Right cardiac atrium (tissue), 5 donors: ENCODE measurements at regions of chr5 and their contacts with region 1.

Region 1: GRCh38 chr5:95730730-95731570 is at the start of gene RHOBTB3:
- DNase-seq: peak; percentile 93 to 97 (median 97)
- ATAC-seq: peak; percentile 83
- H3K4me3 ChIP-seq: peak within 1 kb of the TSS; percentile 67
- H3K27ac ChIP-seq: peak within 1 kb of the TSS; percentile 72
- H3K4me1 ChIP-seq: peaks cover 2% of the 10 kb centered on the region
- H3K27me3 ChIP-seq: no peaks in the 10 kb centered on the region
- total RNA-seq, gene RHOBTB3: 84.7 to 115 (median 104) TPM

Region 2: GRCh38 chr5:95621838-95622629 is 108.9 kb before region 1 on chr5:
- intact Hi-C with region 1: no loop called
- DNase-seq: no peak
- ATAC-seq: no peak
- H3K4me3 ChIP-seq: no peak overlapping the region
- H3K27ac ChIP-seq: no peak overlapping the region
- H3K4me1 ChIP-seq: no peaks in the 10 kb centered on the region
- H3K27me3 ChIP-seq: no peaks in the 10 kb centered on the region

Region 3: GRCh38 chr5:95646554-95647431 is 84.2 kb before region 1 on chr5 and contains the start of gene RFESD:
- intact Hi-C with region 1: loop called in 1 of 4 experiments (anchors 5 kb)
- DNase-seq: peak; percentile 99 to 100 (median 100)
- ATAC-seq: peak; percentile 99 to 100
- H3K4me3 ChIP-seq: peak within 1 kb of the TSS; percentile 62
- H3K27ac ChIP-seq: peak within 1 kb of the TSS; percentile 93
- H3K4me1 ChIP-seq: no peaks in the 10 kb centered on the region
- H3K27me3 ChIP-seq: no peaks in the 10 kb centered on the region
- total RNA-seq, gene RFESD: 3.4 to 9.4 (median 4.9) TPM

Region 4: DNA sequence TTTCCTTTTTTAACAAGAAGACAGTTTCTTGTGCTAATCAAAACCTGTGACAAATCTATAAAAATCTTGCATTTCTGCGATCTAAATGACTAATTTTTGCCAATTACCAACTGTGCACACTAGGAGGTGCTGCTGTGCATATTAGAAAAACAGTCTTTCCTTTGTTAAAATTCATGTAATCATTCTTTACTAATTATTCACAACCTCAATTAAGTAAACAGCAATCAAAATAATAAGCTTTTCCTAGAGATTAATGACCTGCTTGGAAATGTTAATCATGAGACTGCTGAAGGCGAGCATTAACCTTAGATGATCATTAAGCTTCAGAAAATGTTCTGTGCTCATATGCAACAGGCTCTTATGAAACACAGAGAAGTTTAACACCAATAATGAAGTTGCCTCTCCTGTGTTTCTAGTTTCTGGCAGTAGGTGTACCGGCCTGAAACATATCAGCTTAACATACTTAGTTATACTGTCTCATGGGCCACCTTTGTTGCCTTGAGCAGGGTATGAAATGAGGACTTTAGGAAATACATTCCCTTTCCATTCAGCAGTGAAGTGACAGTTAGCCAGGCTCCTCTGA is 66.7 kb before region 1 on chr5:
- intact Hi-C with region 1: loop called (anchors 5 to 10 kb)
- DNase-seq: no peak
- ATAC-seq: no peak
- H3K4me3 ChIP-seq: no peak overlapping the region
- H3K27ac ChIP-seq: no peak overlapping the region
- H3K4me1 ChIP-seq: no peaks in the 10 kb centered on the region
- H3K27me3 ChIP-seq: no peaks in the 10 kb centered on the region

Region 5: GRCh38 chr5:95669540-95669939 is 61.4 kb before region 1 on chr5:
- intact Hi-C with region 1: loop called (anchors 5 to 10 kb)
- DNase-seq: peak; percentile 76 to 86 (median 84)
- ATAC-seq: peak; percentile 96
- H3K4me3 ChIP-seq: no peak overlapping the region
- H3K27ac ChIP-seq: peak overlapping the region; percentile 39
- H3K4me1 ChIP-seq: peaks cover 5% of the 10 kb centered on the region
- H3K27me3 ChIP-seq: no peaks in the 10 kb centered on the region